T-cell (primary cell): ENCODE measurements at regions of chr16 and their contacts with region 1.

Region 1: GRCh38 chr16:27109666-27110523 is 43.2 kb downstream of the C16orf82 start:
- DNase-seq: peak; percentile 34 to 81 (median 68)
- ATAC-seq: peak; percentile 86 to 91 (median 90)
- H3K4me3 ChIP-seq: peak overlapping the region; percentile 30 to 45
- H3K4me3 Mint-ChIP-seq: peak overlapping the region; percentile 34 to 71 (median 59)
- H3K27ac ChIP-seq: no peak overlapping the region
- H3K27ac Mint-ChIP-seq: peak overlapping the region in 1 of 2 donors; percentile 16
- H3K4me1 ChIP-seq: peaks cover 3 to 19% of the 10 kb centered on the region in 2 experiments
- H3K4me1 Mint-ChIP-seq: peaks cover 4 to 25% (median 10%) of the 10 kb centered on the region in 3 donors
- H3K27me3 ChIP-seq: peaks cover 0 to 24% of the 10 kb centered on the region in 2 experiments
- H3K27me3 Mint-ChIP-seq: no peaks in the 10 kb centered on the region

Region 2: DNA sequence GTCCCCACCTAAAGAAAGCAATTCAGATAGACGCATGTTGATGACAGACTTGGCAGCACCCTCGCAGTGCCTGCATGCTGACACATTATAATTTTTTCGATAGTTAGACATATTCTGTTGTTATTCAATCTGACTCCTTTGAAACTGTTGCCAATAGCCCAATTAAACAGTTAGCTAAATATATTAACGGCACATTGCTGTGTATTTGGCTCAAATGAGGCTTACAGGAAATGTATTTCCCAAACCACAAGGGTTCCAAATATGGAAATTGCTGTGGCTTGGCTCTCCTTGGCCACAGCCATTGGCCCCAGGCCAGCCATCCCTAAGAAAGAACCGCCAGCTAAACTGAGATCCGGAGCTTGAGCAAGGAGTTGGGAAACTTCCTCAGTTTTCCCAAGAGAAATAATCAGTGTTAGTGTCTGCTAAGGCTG is 12.1 kb before region 1 on chr16:
- CTCF ChIA-PET with region 1: interaction called in 1 of 2 experiments, 3 read pairs
- POLR2A ChIA-PET with region 1: interaction called, 8 to 15 read pairs
- DNase-seq: no peak
- ATAC-seq: no peak
- H3K4me3 ChIP-seq: no peak overlapping the region
- H3K4me3 Mint-ChIP-seq: no peak overlapping the region
- H3K27ac ChIP-seq: no peak overlapping the region
- H3K27ac Mint-ChIP-seq: no peak overlapping the region
- H3K4me1 ChIP-seq: no peaks in the 10 kb centered on the region
- H3K4me1 Mint-ChIP-seq: no peaks in the 10 kb centered on the region
- H3K27me3 ChIP-seq: peaks cover 2 to 16% of the 10 kb centered on the region in 2 experiments
- H3K27me3 Mint-ChIP-seq: peaks cover 21 to 29% of the 10 kb centered on the region in 2 donors